ENCODE measurements at regions of chr6 and their contacts with region 1.

Region 1: GRCh38 chr6:113632220-113632864 is 224.8 kb upstream of the MARCKS start:
- DNase-seq: peak; percentile 27
- H3K4me3 ChIP-seq: no peak overlapping the region
- H3K27ac ChIP-seq: peak overlapping the region; percentile 99
- H3K4me1 ChIP-seq: peaks cover 96% of the 10 kb centered on the region
- CTCF ChIP-seq: no peak

Region 2: DNA sequence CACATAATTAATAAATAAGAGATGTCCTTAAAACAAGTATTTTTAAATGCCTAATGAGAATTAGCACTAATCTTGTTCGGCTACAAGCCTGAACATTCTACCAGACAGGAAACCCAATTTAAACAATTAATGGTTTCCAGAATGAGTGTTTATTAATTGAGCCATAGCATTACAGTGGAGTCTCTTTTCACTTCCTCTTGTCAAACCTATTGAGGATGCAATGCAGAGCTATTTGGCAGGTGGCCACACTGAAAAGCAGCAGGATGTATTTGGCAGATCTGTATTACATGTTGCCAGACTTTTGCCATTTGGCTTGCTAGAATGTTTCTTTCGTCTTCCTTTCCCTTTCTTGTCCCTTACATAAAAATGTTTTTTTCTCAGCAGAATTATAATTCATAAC is 250.4 kb before region 1 on chr6:
- CTCF ChIA-PET with region 1: no interaction called
- POLR2A ChIA-PET with region 1: interaction called, 3 read pairs
- intact Hi-C with region 1: loop called (anchors 10 kb)
- DNase-seq: peak; percentile 53
- H3K4me3 ChIP-seq: no peak overlapping the region
- H3K27ac ChIP-seq: no peak overlapping the region
- H3K4me1 ChIP-seq: peaks cover 6% of the 10 kb centered on the region
- CTCF ChIP-seq: no peak

Region 3: DNA sequence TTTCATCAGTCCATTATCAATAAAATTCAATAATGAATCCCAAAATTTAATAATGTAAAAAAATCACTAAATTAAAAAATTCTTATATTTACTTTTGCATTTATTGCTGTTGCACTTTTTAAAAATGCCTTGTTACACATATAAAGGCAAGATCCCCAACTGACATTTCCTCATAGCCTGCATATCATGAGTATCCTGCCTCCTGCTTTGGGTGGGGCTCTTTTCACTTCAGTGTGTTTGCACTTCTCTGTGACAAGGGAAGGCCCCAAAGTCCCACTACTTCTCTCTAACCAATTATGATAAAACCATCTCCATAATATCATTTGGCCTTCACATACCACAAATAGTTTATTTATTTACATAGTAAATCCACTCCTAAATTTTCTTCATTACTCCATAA is 221.3 kb before region 1 on chr6:
- CTCF ChIA-PET with region 1: no interaction called
- POLR2A ChIA-PET with region 1: no interaction called
- intact Hi-C with region 1: no loop called
- DNase-seq: no peak
- H3K4me3 ChIP-seq: no peak overlapping the region
- H3K27ac ChIP-seq: no peak overlapping the region
- H3K4me1 ChIP-seq: no peaks in the 10 kb centered on the region
- CTCF ChIP-seq: no peak

Region 4: GRCh38 chr6:113620386-113620785 is 12.0 kb before region 1 on chr6:
- CTCF ChIA-PET with region 1: no interaction called
- POLR2A ChIA-PET with region 1: interaction called, 21 read pairs
- intact Hi-C with region 1: no loop called
- DNase-seq: no peak
- H3K4me3 ChIP-seq: no peak overlapping the region
- H3K27ac ChIP-seq: no peak overlapping the region
- H3K4me1 ChIP-seq: no peaks in the 10 kb centered on the region
- CTCF ChIP-seq: no peak

Region 5: GRCh38 chr6:113642714-113643406 is 10.5 kb after region 1 on chr6:
- CTCF ChIA-PET with region 1: interaction called, 7 read pairs
- POLR2A ChIA-PET with region 1: interaction called, 52 read pairs
- intact Hi-C with region 1: no loop called
- DNase-seq: peak; percentile 45
- H3K4me3 ChIP-seq: peak overlapping the region; percentile 3
- H3K27ac ChIP-seq: no peak overlapping the region
- H3K4me1 ChIP-seq: peaks cover 52% of the 10 kb centered on the region
- CTCF ChIP-seq: no peak

Region 6: DNA sequence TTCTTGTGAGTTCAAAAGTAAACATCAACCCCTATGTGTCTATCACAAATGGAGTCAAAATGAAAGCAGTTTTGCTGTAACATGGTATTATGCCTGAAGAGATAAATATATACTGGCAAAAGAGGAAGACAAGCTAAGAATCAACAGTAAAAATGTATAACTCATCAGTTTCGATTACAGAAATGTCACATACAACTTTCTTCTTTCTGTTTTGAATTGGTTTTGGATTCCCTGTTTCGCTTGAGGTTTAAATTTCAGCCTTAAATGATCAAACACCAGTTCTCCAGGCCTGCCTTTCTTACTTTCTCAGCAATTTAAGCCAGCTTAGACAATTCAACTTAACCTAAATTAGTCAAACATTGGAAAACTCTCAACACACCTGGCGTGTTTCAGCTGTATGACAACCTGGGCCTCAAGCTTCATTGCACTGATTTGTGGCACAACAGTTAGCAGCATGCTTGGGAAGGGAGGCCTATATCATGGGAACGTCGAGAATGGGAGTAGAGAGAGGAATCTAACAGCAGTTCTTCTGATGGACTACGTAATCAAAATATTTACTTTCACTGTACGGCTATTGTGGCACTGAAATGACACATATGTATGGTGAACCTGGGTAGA is 172.9 kb after region 1 on chr6:
- CTCF ChIA-PET with region 1: no interaction called
- POLR2A ChIA-PET with region 1: no interaction called
- intact Hi-C with region 1: loop called (anchors 2 kb)
- DNase-seq: peak; percentile 2
- H3K4me3 ChIP-seq: no peak overlapping the region
- H3K27ac ChIP-seq: no peak overlapping the region
- H3K4me1 ChIP-seq: peaks cover 25% of the 10 kb centered on the region
- CTCF ChIP-seq: no peak

Region 7: DNA sequence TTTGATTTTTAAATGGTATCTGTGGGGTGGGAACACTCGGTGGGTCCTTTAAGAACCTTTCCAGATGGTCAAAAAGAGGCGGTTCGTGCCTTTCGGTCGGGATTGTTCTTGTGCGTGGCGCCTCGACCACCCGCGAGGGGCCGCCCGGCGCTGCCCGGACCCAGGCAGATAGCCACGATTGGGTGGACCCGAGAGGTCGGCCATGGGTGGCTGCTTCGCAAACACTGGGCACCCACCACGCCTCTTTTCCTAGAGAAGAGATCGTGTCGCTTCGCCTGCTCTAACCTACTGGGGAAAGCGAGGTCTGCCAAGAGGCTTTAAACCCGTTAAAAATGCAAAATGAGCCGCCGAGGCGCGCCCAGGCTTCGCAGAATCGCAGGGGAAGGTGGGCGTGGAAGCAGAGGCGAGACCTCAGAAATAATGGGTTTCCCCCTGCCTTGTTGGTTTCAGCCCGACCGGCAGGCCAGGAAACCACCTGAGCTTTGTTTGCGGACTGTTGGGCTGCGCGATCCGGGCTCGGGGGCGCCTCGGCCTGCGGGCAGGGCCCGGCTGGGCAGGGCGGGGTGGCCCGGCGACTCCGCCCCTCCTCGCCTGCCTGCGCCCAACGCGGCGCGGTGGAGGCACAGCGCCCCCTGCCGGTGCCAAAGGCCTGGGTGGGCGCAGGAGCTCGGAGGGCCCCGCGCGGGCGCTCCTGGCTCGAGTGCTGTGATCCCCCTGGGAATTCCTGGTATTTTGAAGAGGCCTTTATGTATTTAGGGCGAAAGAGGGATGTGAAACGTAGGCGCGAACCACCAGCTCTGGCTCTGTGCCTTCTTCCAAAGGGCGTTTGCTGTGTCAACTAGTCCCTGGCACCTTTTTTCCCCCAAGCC is 226.4 kb after region 1 on chr6:
- CTCF ChIA-PET with region 1: no interaction called
- POLR2A ChIA-PET with region 1: no interaction called
- intact Hi-C with region 1: loop called (anchors 2 kb)
- DNase-seq: peak; percentile 75
- H3K4me3 ChIP-seq: peak overlapping the region; percentile 65
- H3K27ac ChIP-seq: no peak overlapping the region
- H3K4me1 ChIP-seq: peaks cover 30% of the 10 kb centered on the region
- CTCF ChIP-seq: peak; percentile 87

Region 8: DNA sequence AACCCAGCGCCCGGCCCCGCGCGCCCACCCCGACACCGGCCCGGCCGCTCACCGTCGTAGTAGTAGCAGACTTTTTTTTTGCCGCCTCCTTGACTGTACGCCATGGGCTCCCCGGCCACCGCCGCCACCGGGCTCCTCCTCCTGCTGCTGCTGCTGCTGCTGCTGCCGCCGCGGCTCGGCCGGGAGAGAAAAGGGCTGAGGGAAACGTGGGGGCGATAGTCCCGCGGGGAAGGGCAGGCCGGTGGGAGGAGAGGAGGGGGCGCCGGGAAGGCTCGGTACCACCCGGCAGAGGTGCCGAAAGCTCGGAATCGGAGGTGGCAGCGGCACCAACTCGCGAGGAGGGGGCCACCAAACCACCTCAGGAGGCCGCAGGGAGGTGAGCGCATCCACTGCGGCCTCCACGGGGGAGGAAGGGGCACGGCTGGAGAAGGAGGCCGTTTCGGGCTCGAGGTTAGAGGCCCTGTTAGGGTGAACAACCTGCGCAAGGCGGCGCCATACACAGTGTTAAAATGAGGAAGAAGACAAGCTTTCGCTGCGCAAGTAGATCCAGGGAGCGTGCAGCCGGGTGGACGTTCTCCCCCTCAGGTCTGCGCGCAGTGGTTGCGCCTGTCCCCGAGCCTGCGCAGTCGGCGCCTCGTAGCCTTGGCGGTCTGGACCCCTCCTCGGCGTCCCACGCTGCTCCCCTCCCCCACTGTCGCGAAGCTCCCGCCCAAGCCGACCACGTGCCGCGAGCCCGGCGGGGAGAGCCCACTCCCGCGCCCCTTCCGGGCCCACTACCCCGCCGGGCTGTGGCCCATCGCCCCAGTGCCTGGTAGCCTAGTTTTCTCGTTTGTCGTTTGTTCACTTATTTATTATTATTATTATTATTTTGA is 338.7 kb after region 1 on chr6 and contains the start of gene HDAC2:
- CTCF ChIA-PET with region 1: no interaction called
- POLR2A ChIA-PET with region 1: no interaction called
- intact Hi-C with region 1: loop called (anchors 10 kb)
- DNase-seq: peak; percentile 95
- H3K4me3 ChIP-seq: peak within 1 kb of the TSS; percentile 82
- H3K27ac ChIP-seq: peak within 1 kb of the TSS; percentile 67
- H3K4me1 ChIP-seq: peaks cover 28% of the 10 kb centered on the region
- CTCF ChIP-seq: peak; percentile 44
- total RNA-seq, gene HDAC2: 37.3 and 40.5 TPM in 2 replicates